ENCODE measurements at regions of chrX and their contacts with region 1.

Region 1: GRCh38 chrX:41923257-41923969 is at the start of gene CASK:
- DNase-seq: peak; percentile 92
- H3K4me3 Mint-ChIP-seq: peak within 1 kb of the TSS; percentile 96
- H3K27ac Mint-ChIP-seq: peak within 1 kb of the TSS; percentile 93
- H3K4me1 Mint-ChIP-seq: peaks cover 26% of the 10 kb centered on the region
- H3K27me3 Mint-ChIP-seq: no peaks in the 10 kb centered on the region
- total RNA-seq, gene CASK: 30.1 to 32.7 TPM

Region 2: DNA sequence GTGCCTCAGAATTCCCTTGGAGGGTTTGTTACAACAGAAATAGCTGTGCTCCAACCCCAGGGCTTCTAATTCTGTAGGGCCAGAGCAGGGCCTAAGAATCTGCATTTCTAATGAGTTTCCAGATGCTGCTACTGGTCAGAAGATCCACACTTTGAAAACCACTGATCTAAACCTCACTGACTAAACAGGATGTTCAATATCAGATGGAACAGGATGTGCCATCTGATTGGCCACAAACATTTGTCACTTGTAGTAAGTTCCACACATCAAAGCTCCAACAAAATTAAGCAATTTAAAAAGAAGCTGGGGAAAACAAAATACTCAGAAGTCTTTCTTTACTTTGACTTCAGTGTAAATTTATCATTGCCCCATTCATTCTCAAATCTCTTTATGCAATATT is 14.3 kb before region 1 on chrX:
- CTCF ChIA-PET with region 1: interaction called, 3 read pairs
- POLR2A ChIA-PET with region 1: interaction called, 10 read pairs
- DNase-seq: peak; percentile 19
- H3K4me3 Mint-ChIP-seq: no peak overlapping the region
- H3K27ac Mint-ChIP-seq: peak overlapping the region; percentile 71
- H3K4me1 Mint-ChIP-seq: peaks cover 38% of the 10 kb centered on the region
- H3K27me3 Mint-ChIP-seq: no peaks in the 10 kb centered on the region

Region 3: GRCh38 chrX:42943051-42943974 is 1019.9 kb after region 1 on chrX:
- CTCF ChIA-PET with region 1: no interaction called
- POLR2A ChIA-PET with region 1: interaction called, 14 read pairs
- DNase-seq: peak; percentile 53
- H3K4me3 Mint-ChIP-seq: peak overlapping the region; percentile 50
- H3K27ac Mint-ChIP-seq: peak overlapping the region; percentile 88
- H3K4me1 Mint-ChIP-seq: peaks cover 84% of the 10 kb centered on the region
- H3K27me3 Mint-ChIP-seq: no peaks in the 10 kb centered on the region